ENCODE measurements at regions of chr5 and their contacts with region 1.

Region 1: DNA sequence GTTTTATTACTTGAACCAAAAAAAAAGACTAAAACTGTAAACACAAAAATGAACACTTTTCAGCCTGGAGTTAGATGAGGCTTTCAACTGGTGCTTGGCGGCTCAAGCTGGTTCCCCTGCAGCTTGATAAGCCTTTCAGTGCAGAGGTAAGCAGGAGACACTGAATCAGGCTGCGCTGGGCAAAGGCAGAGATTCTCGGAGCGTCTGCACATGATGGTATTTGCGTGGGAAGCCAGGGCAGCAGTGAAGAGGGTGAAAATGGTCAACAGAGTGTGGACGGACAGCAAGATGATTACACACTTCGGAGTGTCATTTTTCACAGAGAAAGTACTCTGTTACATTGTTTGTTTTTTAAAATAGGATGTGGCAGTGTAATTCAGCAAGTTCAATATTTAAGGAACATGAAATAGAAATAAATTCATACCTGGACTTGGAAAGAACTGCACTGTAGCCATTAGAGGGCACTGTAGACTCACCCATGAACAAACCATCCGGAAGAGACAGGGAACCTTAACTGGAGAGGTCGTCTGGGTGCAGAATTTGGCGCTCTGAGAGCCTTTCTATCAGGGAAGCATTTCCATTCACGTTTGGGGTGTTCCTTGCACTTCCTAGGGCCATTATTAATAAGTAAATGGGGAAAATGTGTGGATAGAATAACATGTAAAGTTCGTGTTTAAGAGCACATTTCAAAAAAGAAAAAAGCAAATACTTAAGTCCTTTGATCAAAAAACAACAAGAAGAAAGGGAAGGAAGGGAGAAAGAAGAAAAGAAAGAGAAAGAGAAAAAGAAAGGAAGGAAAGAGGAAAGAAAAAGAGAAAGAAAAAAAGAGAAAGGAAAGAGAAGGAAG is 69.8 kb downstream of the ICE1 start:
- DNase-seq: peak in 10 of 14 experiments; percentile 8 to 81 (median 28)
- ATAC-seq: peak; percentile 41
- H3K4me3 ChIP-seq: no peak overlapping the region
- H3K4me3 Mint-ChIP-seq: peak overlapping the region; percentile 69
- H3K27ac ChIP-seq: no peak overlapping the region
- H3K27ac Mint-ChIP-seq: no peak overlapping the region
- H3K4me1 ChIP-seq: peaks cover 21% of the 10 kb centered on the region
- H3K4me1 Mint-ChIP-seq: peaks cover 18% of the 10 kb centered on the region
- H3K27me3 ChIP-seq: no peaks in the 10 kb centered on the region
- H3K27me3 Mint-ChIP-seq: peaks cover 16% of the 10 kb centered on the region
- CTCF ChIP-seq: peak; percentile 64

Region 2: GRCh38 chr5:6632917-6633468 is 1140.7 kb after region 1 on chr5 and contains the starts of genes NSUN2 and SRD5A1:
- CTCF ChIA-PET with region 1: no interaction called
- POLR2A ChIA-PET with region 1: no interaction called
- intact Hi-C with region 1: loop called in 1 of 2 experiments (anchors 10 kb)
- DNase-seq: peak; percentile 78 to 97 (median 90)
- ATAC-seq: peak; percentile 88
- H3K4me3 ChIP-seq: peak within 1 kb of the TSS; percentile 87
- H3K4me3 Mint-ChIP-seq: peak within 1 kb of the TSS; percentile 90
- H3K27ac ChIP-seq: peak within 1 kb of the TSS; percentile 62 to 98
- H3K27ac Mint-ChIP-seq: peak within 1 kb of the TSS; percentile 93
- H3K4me1 ChIP-seq: peaks cover 33% of the 10 kb centered on the region
- H3K4me1 Mint-ChIP-seq: peaks cover 53% of the 10 kb centered on the region
- H3K27me3 ChIP-seq: no peaks in the 10 kb centered on the region
- H3K27me3 Mint-ChIP-seq: no peaks in the 10 kb centered on the region
- CTCF ChIP-seq: no peak
- total RNA-seq, gene NSUN2: 48.3 to 50.8 TPM
- total RNA-seq, gene SRD5A1: 2.3 to 3.0 TPM

Measured in CD4-positive, alpha-beta T cell (primary cell).